ENCODE measurements at regions of chr6 and their contacts with region 1.

Region 1: GRCh38 chr6:71299541-71300470 is 11.2 kb downstream of the OGFRL1 start:
- DNase-seq: no peak
- H3K4me3 ChIP-seq: no peak overlapping the region
- H3K27ac ChIP-seq: no peak overlapping the region
- H3K4me1 ChIP-seq: no peaks in the 10 kb centered on the region
- H3K27me3 ChIP-seq: no peaks in the 10 kb centered on the region

Region 2: DNA sequence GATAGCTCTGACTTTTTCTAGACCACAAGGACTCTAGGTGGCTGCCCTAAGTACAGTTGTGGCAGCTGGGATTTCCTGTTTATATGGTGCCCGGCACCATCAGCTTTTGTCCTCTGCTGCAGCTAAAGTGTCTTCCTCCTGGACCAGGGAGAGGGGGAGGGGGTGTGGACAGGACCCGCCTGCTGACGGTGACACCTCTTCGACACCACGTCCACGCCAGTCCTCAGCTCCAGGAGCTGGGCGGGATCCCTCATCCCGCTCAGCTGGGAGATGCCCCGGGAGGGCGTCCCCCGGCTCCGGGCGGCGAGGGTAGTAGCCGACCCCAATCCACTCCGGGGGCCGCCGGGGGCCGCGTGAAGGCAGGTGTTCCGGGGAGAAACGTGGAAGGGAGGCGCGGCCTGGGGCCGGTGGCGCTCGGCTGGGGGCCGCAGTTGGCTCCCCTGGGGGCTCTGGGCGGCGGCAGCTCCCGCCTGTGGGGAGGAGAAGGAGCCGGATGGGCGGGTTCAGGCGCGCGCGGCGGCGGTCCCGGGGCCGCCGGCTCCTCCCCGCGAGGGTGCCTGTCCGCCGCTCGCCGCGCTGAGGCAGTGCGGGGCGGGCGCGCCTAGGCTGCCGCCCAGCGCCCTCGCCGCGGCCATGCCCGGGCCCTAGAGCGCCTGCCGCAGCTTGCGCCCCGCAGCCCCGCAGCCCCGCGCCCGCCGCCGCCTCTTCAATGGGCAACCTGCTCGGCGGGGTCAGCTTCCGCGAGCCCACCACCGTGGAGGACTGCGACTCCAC is 11.4 kb before region 1 on chr6 and contains the start of gene OGFRL1:
- CTCF ChIA-PET with region 1: interaction called, 18 read pairs
- POLR2A ChIA-PET with region 1: interaction called, 8 read pairs
- DNase-seq: peak; percentile 68 to 90 (median 83)
- H3K4me3 ChIP-seq: peak within 1 kb of the TSS; percentile 62 to 88 (median 84)
- H3K27ac ChIP-seq: peak within 1 kb of the TSS; percentile 9 to 67
- H3K4me1 ChIP-seq: peaks cover 13 to 39% (median 30%) of the 10 kb centered on the region in 4 experiments
- H3K27me3 ChIP-seq: no peaks in the 10 kb centered on the region

Measured in common myeloid progenitor, CD34-positive (primary cell).